SK-N-SH (cell line): ENCODE measurements at regions of chr4 and their contacts with region 1.

Region 1: GRCh38 chr4:139030614-139031235 is 15.1 kb downstream of the NOCT start:
- DNase-seq: peak; percentile 67
- H3K4me3 ChIP-seq: no peak overlapping the region
- H3K27ac ChIP-seq: no peak overlapping the region; a peak in 1 of 4 replicates
- H3K4me1 ChIP-seq: peaks cover 0 to 6% of the 10 kb centered on the region in 2 experiments; a peak in 1 of 4 replicates
- H3K27me3 ChIP-seq: no peaks in the 10 kb centered on the region
- CTCF ChIP-seq: peak; percentile 88
- EP300 ChIP-seq: no peak
- RAD21 ChIP-seq: peak; percentile 96

Region 2: GRCh38 chr4:139015269-139015947 is 15.3 kb before region 1 on chr4 and contains the start of gene NOCT:
- CTCF ChIA-PET with region 1: interaction called, 61 read pairs
- POLR2A ChIA-PET with region 1: interaction called, 3 read pairs
- DNase-seq: peak; percentile 91
- H3K4me3 ChIP-seq: peak within 1 kb of the TSS; percentile 73 to 85
- H3K27ac ChIP-seq: peak within 1 kb of the TSS; percentile 90 to 99
- H3K4me1 ChIP-seq: peaks cover 30 to 33% of the 10 kb centered on the region in 2 experiments
- H3K27me3 ChIP-seq: no peaks in the 10 kb centered on the region
- CTCF ChIP-seq: no peak
- EP300 ChIP-seq: peak in 1 of 2 experiments; percentile 60; a peak in 2 of 4 replicates
- RAD21 ChIP-seq: no peak
- polyA plus RNA-seq, gene NOCT: 3.8 TPM in 2 replicates

Region 3: DNA sequence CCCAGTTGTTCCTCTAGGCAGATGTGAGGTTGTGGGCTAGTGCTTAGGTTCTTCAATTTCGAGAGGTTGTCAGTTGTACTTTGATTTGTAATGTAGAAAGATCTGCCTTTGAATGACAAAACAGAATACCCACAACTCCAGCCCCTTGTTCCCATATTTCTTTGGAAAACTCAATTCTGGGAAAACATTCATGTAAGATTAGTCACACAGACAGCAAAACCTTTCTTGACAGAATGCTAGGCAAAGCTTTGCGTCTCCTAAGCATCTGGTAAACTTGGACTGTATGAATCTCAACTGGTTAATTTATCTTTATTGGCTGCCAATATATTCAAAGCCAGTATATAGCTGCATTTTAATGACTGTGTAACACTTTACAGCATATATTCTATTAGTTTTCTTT is 19.7 kb after region 1 on chr4:
- CTCF ChIA-PET with region 1: interaction called, 52 read pairs
- POLR2A ChIA-PET with region 1: no interaction called
- DNase-seq: no peak
- H3K4me3 ChIP-seq: no peak overlapping the region
- H3K27ac ChIP-seq: no peak overlapping the region
- H3K4me1 ChIP-seq: 0 out of 4 replicates have a peak, but pooled peaks cover 0 to 4% of the 10 kb centered on the region in 2 experiments
- H3K27me3 ChIP-seq: no peaks in the 10 kb centered on the region
- CTCF ChIP-seq: no peak
- EP300 ChIP-seq: no peak
- RAD21 ChIP-seq: no peak

Region 4: DNA sequence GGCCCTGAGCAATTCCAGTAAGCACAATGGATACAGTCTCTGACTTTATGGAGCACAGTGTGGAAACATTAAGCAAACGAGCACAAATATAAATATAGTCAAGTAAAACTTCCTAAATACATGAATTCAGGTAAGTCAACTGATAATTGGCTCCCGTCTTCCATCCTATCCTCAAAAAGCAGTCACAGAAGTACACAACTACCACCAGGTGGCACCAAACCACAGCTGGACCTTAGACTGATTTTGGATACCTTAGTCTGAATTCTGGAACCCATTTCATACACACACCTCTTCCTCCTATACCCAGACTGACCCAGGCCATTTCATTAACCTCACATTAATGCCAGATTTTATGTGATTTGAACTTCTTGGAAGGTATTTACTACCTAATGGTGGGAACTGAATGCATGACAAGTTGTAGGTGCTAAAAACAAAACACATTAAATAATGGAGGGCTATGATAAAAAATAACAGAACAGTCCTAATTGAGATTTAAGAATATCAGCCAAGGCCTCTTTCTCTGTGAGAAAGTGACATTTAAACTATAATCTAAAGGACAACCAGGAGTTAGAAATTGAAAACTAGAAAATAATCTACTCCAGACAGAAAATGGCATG is 68.7 kb after region 1 on chr4:
- CTCF ChIA-PET with region 1: interaction called, 19 read pairs
- POLR2A ChIA-PET with region 1: no interaction called
- DNase-seq: peak; percentile 76
- H3K4me3 ChIP-seq: no peak overlapping the region; a peak in 1 of 4 replicates
- H3K27ac ChIP-seq: no peak overlapping the region
- H3K4me1 ChIP-seq: peaks cover 0 to 2% of the 10 kb centered on the region in 2 experiments; a peak in 1 of 4 replicates
- H3K27me3 ChIP-seq: no peaks in the 10 kb centered on the region
- CTCF ChIP-seq: peak; percentile 89
- EP300 ChIP-seq: no peak
- RAD21 ChIP-seq: peak; percentile 93

Region 5: GRCh38 chr4:139223682-139224317 is 193.1 kb after region 1 on chr4:
- CTCF ChIA-PET with region 1: interaction called, 12 read pairs
- POLR2A ChIA-PET with region 1: no interaction called
- DNase-seq: no peak
- H3K4me3 ChIP-seq: no peak overlapping the region
- H3K27ac ChIP-seq: 0 out of 4 replicates have a peak overlapping the region, but pooled peaks of 1 of the 2 experiments have one; percentile 18
- H3K4me1 ChIP-seq: peaks cover 0 to 5% of the 10 kb centered on the region in 2 experiments; a peak in 1 of 4 replicates
- H3K27me3 ChIP-seq: no peaks in the 10 kb centered on the region
- CTCF ChIP-seq: no peak
- EP300 ChIP-seq: no peak
- RAD21 ChIP-seq: no peak

Region 6: GRCh38 chr4:139242511-139243051 is 211.9 kb after region 1 on chr4:
- CTCF ChIA-PET with region 1: no interaction called
- POLR2A ChIA-PET with region 1: no interaction called
- DNase-seq: no peak
- H3K4me3 ChIP-seq: no peak overlapping the region
- H3K27ac ChIP-seq: peak overlapping the region; percentile 39 to 96
- H3K4me1 ChIP-seq: peaks cover 3 to 39% of the 10 kb centered on the region in 2 experiments
- H3K27me3 ChIP-seq: no peaks in the 10 kb centered on the region
- CTCF ChIP-seq: no peak
- EP300 ChIP-seq: peak in 1 of 2 experiments; percentile 66; a peak in 1 of 4 replicates
- RAD21 ChIP-seq: no peak

Region 7: GRCh38 chr4:139301113-139301820 is 270.5 kb after region 1 on chr4 and contains the start of gene NAA15:
- CTCF ChIA-PET with region 1: interaction called, 27 read pairs
- POLR2A ChIA-PET with region 1: no interaction called
- DNase-seq: peak; percentile 97
- H3K4me3 ChIP-seq: peak within 1 kb of the TSS; percentile 91 to 97
- H3K27ac ChIP-seq: peak within 1 kb of the TSS; percentile 90 to 94
- H3K4me1 ChIP-seq: peaks cover 15 to 19% of the 10 kb centered on the region in 2 experiments; a peak in 3 of 4 replicates
- H3K27me3 ChIP-seq: no peaks in the 10 kb centered on the region
- CTCF ChIP-seq: no peak
- EP300 ChIP-seq: peak; percentile 38 to 47; a peak in 2 of 4 replicates
- RAD21 ChIP-seq: 0 out of 2 replicates have a peak, but pooled peaks have one; percentile 8
- polyA plus RNA-seq, gene NAA15: 7.1 and 7.8 TPM in 2 replicates